ENCODE measurements at regions of chr2 and their contacts with region 1.

Region 1: DNA sequence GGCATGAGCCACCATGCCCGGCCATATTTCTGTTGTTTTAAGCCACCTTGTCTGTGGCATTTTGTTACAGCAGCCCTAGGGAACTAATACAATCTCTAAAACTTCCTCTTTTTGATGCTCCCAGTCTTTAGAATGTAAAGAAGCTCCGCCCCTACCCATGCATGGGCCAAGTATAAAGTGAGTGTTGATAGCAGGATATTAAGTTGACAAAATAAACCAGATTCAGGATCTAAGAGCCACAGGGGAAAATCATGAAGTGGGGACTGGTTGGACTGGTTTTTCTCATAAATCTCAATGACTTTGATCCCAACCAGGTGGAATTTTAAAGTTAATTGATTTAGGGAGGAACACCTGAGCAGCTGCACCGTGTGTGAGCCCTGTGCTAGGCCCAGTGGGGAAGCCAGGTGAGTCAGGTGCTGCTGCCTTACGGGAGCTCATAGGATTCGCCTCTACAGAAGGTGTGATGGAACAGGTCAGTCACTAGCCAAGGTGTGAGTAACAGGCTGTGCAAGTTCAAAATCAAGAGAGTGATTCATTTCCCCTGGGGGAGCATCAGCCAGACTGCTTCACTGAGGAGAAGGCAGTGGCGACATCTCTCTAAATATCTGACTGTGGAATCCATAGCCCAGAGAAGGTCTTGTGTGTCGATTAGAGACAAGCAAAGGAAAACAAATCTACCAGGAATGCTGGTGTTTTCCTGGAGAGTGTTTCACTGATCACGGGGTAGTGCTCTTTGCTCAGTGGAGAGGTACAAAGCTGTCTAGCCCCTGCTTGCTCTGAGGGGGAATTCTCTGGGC is 63.0 kb upstream of the MSH2 start:
- DNase-seq: no peak
- H3K4me3 ChIP-seq: no peak overlapping the region
- H3K27ac ChIP-seq: no peak overlapping the region
- H3K4me1 ChIP-seq: no peaks in the 10 kb centered on the region
- H3K27me3 ChIP-seq: no peaks in the 10 kb centered on the region
- CTCF ChIP-seq: no peak
- EP300 ChIP-seq: no peak
- POLR2A ChIP-seq: no peak

Region 2: DNA sequence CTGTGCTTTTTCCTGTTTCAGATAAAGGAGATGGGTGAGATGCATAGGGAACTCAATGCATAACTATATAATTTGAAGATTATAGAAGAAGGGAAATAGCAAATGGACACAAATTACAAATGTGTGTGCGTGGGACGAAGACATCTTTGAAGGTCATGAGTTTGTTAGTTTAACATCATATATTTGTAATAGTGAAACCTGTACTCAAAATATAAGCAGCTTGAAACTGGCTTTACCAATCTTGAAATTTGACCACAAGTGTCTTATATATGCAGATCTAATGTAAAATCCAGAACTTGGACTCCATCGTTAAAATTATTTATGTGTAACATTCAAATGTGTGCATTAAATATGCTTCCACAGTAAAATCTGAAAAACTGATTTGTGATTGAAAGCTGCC is 46.6 kb after region 1 on chr2:
- intact Hi-C with region 1: loop called in 3 of 4 experiments (anchors 10 kb)
- DNase-seq: no peak
- H3K4me3 ChIP-seq: no peak overlapping the region
- H3K27ac ChIP-seq: no peak overlapping the region
- H3K4me1 ChIP-seq: no peaks in the 10 kb centered on the region
- H3K27me3 ChIP-seq: no peaks in the 10 kb centered on the region
- CTCF ChIP-seq: no peak
- EP300 ChIP-seq: no peak
- POLR2A ChIP-seq: no peak

Region 3: DNA sequence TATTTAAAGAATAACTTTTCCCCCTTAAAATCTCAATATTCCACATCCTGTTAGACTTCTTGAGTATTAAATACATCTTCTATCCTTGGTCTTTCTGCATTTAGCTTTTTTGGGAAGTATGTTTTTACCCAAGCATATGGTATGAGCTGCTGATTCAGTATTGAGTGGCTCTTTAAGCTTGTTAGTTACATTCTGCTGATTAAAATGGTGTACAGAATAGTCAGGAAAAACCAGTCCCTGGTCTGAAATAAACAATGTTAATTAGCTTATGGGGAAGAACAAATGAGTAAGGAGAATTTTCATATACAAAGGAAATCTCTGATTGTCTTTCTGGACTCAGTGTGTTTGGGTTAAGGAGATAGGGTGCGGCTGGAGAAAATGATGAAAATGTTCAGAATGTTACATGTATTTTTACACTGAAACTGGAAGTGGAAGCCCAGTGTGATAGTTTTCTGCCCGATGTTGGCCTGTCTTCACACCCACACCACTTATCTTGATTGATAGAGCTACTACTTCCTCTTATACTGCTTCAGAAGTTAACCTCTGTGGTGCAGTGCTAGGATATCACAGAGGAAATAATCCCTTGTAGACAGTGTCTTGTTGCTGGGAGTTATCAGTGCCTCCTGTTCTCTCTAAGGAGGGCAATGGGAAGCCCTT is 147.0 kb after region 1 on chr2:
- intact Hi-C with region 1: no loop called
- DNase-seq: no peak
- H3K4me3 ChIP-seq: no peak overlapping the region
- H3K27ac ChIP-seq: no peak overlapping the region
- H3K4me1 ChIP-seq: no peaks in the 10 kb centered on the region
- H3K27me3 ChIP-seq: no peaks in the 10 kb centered on the region
- CTCF ChIP-seq: no peak
- EP300 ChIP-seq: no peak
- POLR2A ChIP-seq: no peak